ENCODE measurements at regions of chr4 and their contacts with region 1.

Region 1: GRCh38 chr4:53929955-53930798 is 134.2 kb downstream of the CHIC2 start:
- DNase-seq: no peak
- H3K4me3 ChIP-seq: no peak overlapping the region
- H3K27ac ChIP-seq: no peak overlapping the region
- H3K4me1 ChIP-seq: peaks cover 4 to 45% (median 12%) of the 10 kb centered on the region in 3 donors
- H3K27me3 ChIP-seq: peaks cover 0 to 8% (median 0%) of the 10 kb centered on the region in 4 donors
- CTCF ChIP-seq: peak in 5 of 6 experiments; percentile 65 to 87 (median 81)
- POLR2A ChIP-seq: no peak

Region 2: GRCh38 chr4:54217642-54218495 is 287.7 kb after region 1 on chr4:
- intact Hi-C with region 1: loop called (anchors 5 kb)
- DNase-seq: peak; percentile 21
- H3K4me3 ChIP-seq: peak overlapping the region in 3 of 4 donors; percentile 29 to 58 (median 40)
- H3K27ac ChIP-seq: peak overlapping the region; percentile 15 to 60 (median 39)
- H3K4me1 ChIP-seq: peaks cover 2 to 41% (median 24%) of the 10 kb centered on the region in 3 donors
- H3K27me3 ChIP-seq: peaks cover 0 to 38% (median 0%) of the 10 kb centered on the region in 4 donors
- CTCF ChIP-seq: peak; percentile 90 to 96 (median 94)
- POLR2A ChIP-seq: no peak

Region 3: GRCh38 chr4:54840992-54841768 is 911.0 kb after region 1 on chr4:
- intact Hi-C with region 1: no loop called
- DNase-seq: no peak
- H3K4me3 ChIP-seq: no peak overlapping the region
- H3K27ac ChIP-seq: no peak overlapping the region
- H3K4me1 ChIP-seq: peaks cover 0 to 9% (median 0%) of the 10 kb centered on the region in 3 donors
- H3K27me3 ChIP-seq: peaks cover 0 to 4% (median 0%) of the 10 kb centered on the region in 4 donors
- CTCF ChIP-seq: peak in 4 of 6 experiments; percentile 12 to 36 (median 23)
- POLR2A ChIP-seq: no peak

Measured in esophagus squamous epithelium (tissue), 5 donors.